Activated CD4-positive, alpha-beta T cell treated with anti-CD3 and anti-CD28 coated beads for 36 hours (primary cell): ENCODE measurements at regions of chr22 and their contacts with region 1.

Region 1: GRCh38 chr22:19122143-19122751 is at the start of gene DGCR2:
- DNase-seq: peak; percentile 99
- ATAC-seq: peak; percentile 97
- H3K4me3 Mint-ChIP-seq: peak within 1 kb of the TSS; percentile 80
- H3K27ac Mint-ChIP-seq: peak within 1 kb of the TSS; percentile 58
- H3K4me1 Mint-ChIP-seq: peaks cover 42% of the 10 kb centered on the region
- H3K27me3 Mint-ChIP-seq: no peaks in the 10 kb centered on the region
- total RNA-seq, gene DGCR2: 23.7 to 27.5 TPM

Region 2: GRCh38 chr22:19109198-19110067 is 12.8 kb before region 1 on chr22:
- CTCF ChIA-PET with region 1: interaction called, 4 read pairs
- POLR2A ChIA-PET with region 1: interaction called, 13 read pairs
- intact Hi-C with region 1: loop called in 1 of 2 experiments (anchors 1 kb)
- DNase-seq: peak; percentile 70
- ATAC-seq: peak; percentile 94
- H3K4me3 Mint-ChIP-seq: peak overlapping the region; percentile 5
- H3K27ac Mint-ChIP-seq: peak overlapping the region; percentile 72
- H3K4me1 Mint-ChIP-seq: peaks cover 68% of the 10 kb centered on the region
- H3K27me3 Mint-ChIP-seq: no peaks in the 10 kb centered on the region

Region 3: DNA sequence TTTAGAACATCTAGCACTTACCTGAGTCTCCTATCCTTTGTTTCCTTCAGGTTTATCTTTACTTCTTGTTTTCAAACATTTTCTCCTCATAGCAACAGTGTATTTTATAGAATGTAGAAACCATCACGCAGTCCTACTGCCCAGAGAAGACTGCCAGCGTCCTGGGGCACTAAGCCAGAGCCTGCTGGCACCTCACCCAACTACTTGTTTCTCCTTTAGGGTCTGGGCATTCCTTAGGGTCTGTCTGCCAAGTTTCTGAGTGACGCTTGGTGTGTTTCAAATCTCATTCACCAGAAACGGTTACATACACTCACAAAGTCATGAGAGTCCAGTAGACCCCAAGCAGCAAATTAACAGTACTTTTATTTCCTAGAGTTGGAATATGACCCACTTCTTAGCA is 105.9 kb after region 1 on chr22:
- CTCF ChIA-PET with region 1: no interaction called
- POLR2A ChIA-PET with region 1: no interaction called
- intact Hi-C with region 1: no loop called
- DNase-seq: no peak
- ATAC-seq: no peak
- H3K4me3 Mint-ChIP-seq: no peak overlapping the region
- H3K27ac Mint-ChIP-seq: no peak overlapping the region
- H3K4me1 Mint-ChIP-seq: no peaks in the 10 kb centered on the region
- H3K27me3 Mint-ChIP-seq: no peaks in the 10 kb centered on the region

Region 4: GRCh38 chr22:19432133-19432851 is 310.0 kb after region 1 on chr22 and contains the start of gene MRPL40:
- CTCF ChIA-PET with region 1: no interaction called
- POLR2A ChIA-PET with region 1: no interaction called
- intact Hi-C with region 1: loop called in 1 of 2 experiments (anchors 1 kb)
- DNase-seq: peak; percentile 94
- ATAC-seq: peak; percentile 86
- H3K4me3 Mint-ChIP-seq: peak within 1 kb of the TSS; percentile 75
- H3K27ac Mint-ChIP-seq: peak within 1 kb of the TSS; percentile 96
- H3K4me1 Mint-ChIP-seq: peaks cover 43% of the 10 kb centered on the region
- H3K27me3 Mint-ChIP-seq: no peaks in the 10 kb centered on the region
- total RNA-seq, gene MRPL40: 34.1 to 34.4 TPM

Region 5: DNA sequence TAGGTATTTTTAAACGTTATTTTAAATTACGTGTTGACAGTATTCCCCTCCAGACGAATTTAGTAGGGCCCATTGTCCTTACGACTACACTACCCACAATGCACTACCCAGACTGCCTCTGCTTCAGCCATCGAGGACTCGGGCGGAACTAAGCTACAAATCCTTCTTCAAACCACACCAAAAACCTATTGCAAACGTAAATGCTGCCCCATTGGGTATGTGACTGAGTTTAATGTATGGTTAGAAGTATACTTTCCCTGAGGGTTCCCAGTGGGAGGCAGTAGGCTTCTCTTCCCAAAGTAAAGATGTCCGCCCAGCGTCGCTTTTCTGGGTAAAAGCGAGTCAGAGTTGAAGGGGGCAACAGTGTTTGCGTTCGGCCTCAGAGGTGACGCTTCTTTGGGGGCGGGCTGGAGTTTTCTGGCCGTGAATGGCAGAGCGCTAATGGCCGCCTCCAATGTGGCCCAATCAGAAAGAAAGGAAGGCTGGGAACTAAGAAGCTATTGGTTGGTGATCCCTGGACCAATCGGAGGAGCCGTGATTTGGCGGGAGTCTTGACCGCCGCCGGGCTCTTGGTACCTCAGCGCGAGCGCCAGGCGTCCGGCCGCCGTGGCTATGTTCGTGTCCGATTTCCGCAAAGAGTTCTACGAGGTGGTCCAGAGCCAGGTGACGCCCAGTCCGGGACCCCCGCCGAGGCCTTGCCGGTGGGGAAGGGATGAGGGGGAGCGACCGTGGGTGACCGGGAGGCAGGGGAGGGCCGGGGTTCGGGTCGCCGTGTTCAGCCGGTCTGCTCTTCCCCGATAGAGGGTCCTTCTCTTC is 357.3 kb after region 1 on chr22 and contains the start of gene CDC45:
- CTCF ChIA-PET with region 1: no interaction called
- POLR2A ChIA-PET with region 1: interaction called, 3 read pairs
- intact Hi-C with region 1: loop called (anchors 1 to 5 kb)
- DNase-seq: peak; percentile 97
- ATAC-seq: peak; percentile 91
- H3K4me3 Mint-ChIP-seq: peak within 1 kb of the TSS; percentile 99
- H3K27ac Mint-ChIP-seq: peak within 1 kb of the TSS; percentile 99
- H3K4me1 Mint-ChIP-seq: peaks cover 45% of the 10 kb centered on the region
- H3K27me3 Mint-ChIP-seq: no peaks in the 10 kb centered on the region
- total RNA-seq, gene CDC45: 103 to 111 TPM